Activated B cell treated with CpG ODN at 0.5 μM for 24 hours (primary cell): ENCODE measurements at regions of chr16 and their contacts with region 1.

Region 1: DNA sequence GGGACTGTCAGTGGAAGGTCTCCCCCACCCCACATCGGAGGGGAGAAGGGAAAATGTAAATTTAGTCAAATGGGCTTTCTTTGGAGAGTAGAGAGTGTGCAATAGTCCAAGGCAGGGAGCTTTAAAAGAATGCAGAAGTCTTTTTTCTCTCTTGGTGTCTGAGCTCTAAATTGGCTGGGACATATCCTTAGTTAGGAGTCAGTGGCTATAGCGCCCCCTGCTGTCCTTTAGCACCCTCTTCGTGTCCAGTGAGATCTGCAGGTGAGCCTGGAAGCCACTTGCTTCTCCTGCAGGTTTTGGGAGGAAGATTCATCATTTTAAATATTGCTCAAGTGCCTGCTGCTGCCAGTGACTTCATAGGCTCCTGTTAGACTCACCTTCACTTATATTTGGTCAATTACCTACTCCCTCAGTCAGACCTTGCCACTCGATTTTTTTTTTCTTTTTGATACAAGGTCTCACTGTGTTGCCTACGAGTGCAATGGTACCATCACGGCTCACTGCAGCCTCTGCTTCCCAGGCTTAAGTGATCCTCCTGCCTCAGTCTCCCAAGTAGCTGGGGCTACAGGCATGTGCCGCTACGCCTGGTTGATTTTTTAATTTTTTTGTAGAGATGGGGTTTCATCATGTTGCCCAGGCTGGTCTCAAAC is 174.8 kb downstream of the PRKCB start:
- DNase-seq: peak; percentile 52
- ATAC-seq: peak; percentile 12
- H3K4me3 Mint-ChIP-seq: peak overlapping the region; percentile 65
- H3K27ac Mint-ChIP-seq: peak overlapping the region; percentile 72
- H3K4me1 Mint-ChIP-seq: peaks cover 98% of the 10 kb centered on the region
- H3K27me3 Mint-ChIP-seq: no peaks in the 10 kb centered on the region
- CTCF ChIP-seq: peak; percentile 39

Region 2: DNA sequence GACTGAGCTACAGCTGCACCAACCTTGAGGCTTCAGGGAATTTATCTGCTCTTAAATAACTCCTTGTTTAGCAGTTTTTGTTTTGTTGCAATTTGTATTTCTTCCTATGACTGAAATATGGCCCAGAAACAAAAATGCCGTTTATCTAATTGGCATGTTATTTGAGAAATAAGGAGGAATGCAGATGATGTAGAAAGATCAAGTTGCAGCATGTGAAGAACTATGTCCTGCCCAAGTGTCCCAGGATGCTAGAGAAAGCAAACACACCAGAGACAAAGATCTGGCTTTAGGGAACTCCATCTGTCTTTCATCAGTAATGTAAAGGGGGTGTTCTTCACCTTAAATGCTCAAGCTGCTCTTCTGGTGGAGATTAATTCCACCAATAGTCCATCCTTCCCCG is 891.0 kb before region 1 on chr16:
- CTCF ChIA-PET with region 1: no interaction called
- POLR2A ChIA-PET with region 1: no interaction called
- intact Hi-C with region 1: no loop called
- DNase-seq: no peak
- ATAC-seq: no peak
- H3K4me3 Mint-ChIP-seq: no peak overlapping the region
- H3K27ac Mint-ChIP-seq: no peak overlapping the region
- H3K4me1 Mint-ChIP-seq: no peaks in the 10 kb centered on the region
- H3K27me3 Mint-ChIP-seq: no peaks in the 10 kb centered on the region
- CTCF ChIP-seq: no peak

Region 3: DNA sequence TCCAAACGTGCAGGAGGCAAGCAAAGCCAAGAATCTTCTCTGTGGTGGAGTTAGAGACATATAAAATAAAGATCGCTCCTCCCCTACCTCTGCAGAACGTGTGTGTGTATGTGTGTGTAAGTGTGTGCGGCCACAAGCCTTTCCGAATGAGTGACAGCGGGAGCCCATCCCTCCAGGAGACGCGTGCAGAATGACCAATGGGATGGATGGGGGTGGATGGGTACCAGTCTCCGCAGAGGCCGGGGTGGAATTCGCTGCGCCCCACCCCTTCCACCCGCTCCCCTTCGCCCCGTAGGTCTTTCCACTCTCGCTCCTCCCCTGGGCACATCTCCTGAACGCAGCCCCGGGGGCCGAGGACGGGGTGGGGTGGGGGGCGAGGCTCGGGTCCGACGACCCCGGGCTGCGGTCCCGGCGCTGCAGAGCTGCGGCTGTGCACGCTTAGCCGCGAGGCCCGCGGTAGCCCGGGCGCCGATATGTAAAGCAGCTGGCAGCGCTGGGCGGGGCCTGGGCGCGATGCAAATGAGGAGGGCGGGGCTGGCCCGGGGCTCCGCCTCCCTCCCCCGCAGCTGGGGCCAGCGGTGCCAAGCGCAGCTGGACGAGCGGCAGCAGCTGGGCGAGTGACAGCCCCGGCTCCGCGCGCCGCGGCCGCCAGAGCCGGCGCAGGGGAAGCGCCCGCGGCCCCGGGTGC is 175.0 kb before region 1 on chr16 and contains the start of gene PRKCB:
- CTCF ChIA-PET with region 1: interaction called, 9 read pairs
- POLR2A ChIA-PET with region 1: interaction called, 6 read pairs
- intact Hi-C with region 1: loop called (anchors 1 kb)
- DNase-seq: peak; percentile 98
- ATAC-seq: peak; percentile 80
- H3K4me3 Mint-ChIP-seq: peak within 1 kb of the TSS; percentile 98
- H3K27ac Mint-ChIP-seq: peak within 1 kb of the TSS; percentile 91
- H3K4me1 Mint-ChIP-seq: peaks cover 43% of the 10 kb centered on the region
- H3K27me3 Mint-ChIP-seq: no peaks in the 10 kb centered on the region
- CTCF ChIP-seq: no peak
- total RNA-seq, gene PRKCB: 122 and 146 TPM in 2 replicates

Region 4: GRCh38 chr16:23863511-23864422 is 146.8 kb before region 1 on chr16:
- CTCF ChIA-PET with region 1: interaction called, 22 read pairs
- POLR2A ChIA-PET with region 1: interaction called, 6 read pairs
- intact Hi-C with region 1: loop called (anchors 5 kb)
- DNase-seq: no peak
- ATAC-seq: peak; percentile 78
- H3K4me3 Mint-ChIP-seq: peak overlapping the region; percentile 87
- H3K27ac Mint-ChIP-seq: peak overlapping the region; percentile 96
- H3K4me1 Mint-ChIP-seq: peaks cover 95% of the 10 kb centered on the region
- H3K27me3 Mint-ChIP-seq: no peaks in the 10 kb centered on the region
- CTCF ChIP-seq: no peak

Region 5: DNA sequence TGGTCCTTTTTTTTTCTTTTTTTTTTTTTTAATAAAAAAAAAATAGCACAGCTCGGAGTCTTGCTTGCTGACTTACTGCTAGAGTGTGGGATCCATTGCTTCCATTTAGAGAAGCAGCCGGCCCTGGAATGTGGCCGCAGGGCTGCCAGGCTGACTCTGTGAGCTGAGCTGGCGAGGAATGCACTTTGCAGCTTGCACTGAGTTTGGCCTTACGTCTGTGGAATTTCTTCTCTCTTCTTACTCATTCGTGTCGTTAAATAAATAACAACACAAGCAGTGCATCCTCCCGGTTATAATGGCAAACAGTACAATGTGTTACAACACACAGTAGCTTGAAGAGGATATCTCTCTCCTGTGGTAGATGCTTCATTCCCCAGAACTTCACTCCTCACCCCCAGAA is 105.5 kb before region 1 on chr16:
- CTCF ChIA-PET with region 1: interaction called, 12 read pairs
- POLR2A ChIA-PET with region 1: no interaction called
- intact Hi-C with region 1: no loop called
- DNase-seq: no peak
- ATAC-seq: no peak
- H3K4me3 Mint-ChIP-seq: no peak overlapping the region
- H3K27ac Mint-ChIP-seq: peak overlapping the region; percentile 6
- H3K4me1 Mint-ChIP-seq: peaks cover 94% of the 10 kb centered on the region
- H3K27me3 Mint-ChIP-seq: no peaks in the 10 kb centered on the region
- CTCF ChIP-seq: no peak

Region 6: GRCh38 chr16:23987443-23987842 is 23.1 kb before region 1 on chr16:
- CTCF ChIA-PET with region 1: interaction called, 6 read pairs
- POLR2A ChIA-PET with region 1: interaction called, 8 read pairs
- intact Hi-C with region 1: loop called (anchors 1 kb)
- DNase-seq: no peak
- ATAC-seq: peak; percentile 97
- H3K4me3 Mint-ChIP-seq: peak overlapping the region; percentile 46
- H3K27ac Mint-ChIP-seq: peak overlapping the region; percentile 78
- H3K4me1 Mint-ChIP-seq: peaks cover 52% of the 10 kb centered on the region
- H3K27me3 Mint-ChIP-seq: no peaks in the 10 kb centered on the region
- CTCF ChIP-seq: no peak